WTC11 (cell line): ENCODE measurements at regions of chr18 and their contacts with region 1.

Region 1: GRCh38 chr18:12766986-12767433 is 64.2 kb downstream of the PSMG2 start:
- DNase-seq: peak; percentile 82
- ATAC-seq: peak; percentile 99
- H3K4me3 Mint-ChIP-seq: no peak overlapping the region
- H3K27ac Mint-ChIP-seq: no peak overlapping the region
- H3K4me1 Mint-ChIP-seq: peaks cover 4% of the 10 kb centered on the region
- H3K27me3 Mint-ChIP-seq: no peaks in the 10 kb centered on the region
- CTCF ChIP-seq: no peak

Region 2: GRCh38 chr18:12726774-12727550 is 40.0 kb before region 1 on chr18:
- CTCF ChIA-PET with region 1: interaction called, 19 read pairs
- POLR2A ChIA-PET with region 1: interaction called, 4 read pairs
- DNase-seq: peak; percentile 60
- ATAC-seq: peak; percentile 89
- H3K4me3 Mint-ChIP-seq: no peak overlapping the region
- H3K27ac Mint-ChIP-seq: peak overlapping the region; percentile 43
- H3K4me1 Mint-ChIP-seq: peaks cover 7% of the 10 kb centered on the region
- H3K27me3 Mint-ChIP-seq: no peaks in the 10 kb centered on the region
- CTCF ChIP-seq: peak; percentile 90

Region 3: DNA sequence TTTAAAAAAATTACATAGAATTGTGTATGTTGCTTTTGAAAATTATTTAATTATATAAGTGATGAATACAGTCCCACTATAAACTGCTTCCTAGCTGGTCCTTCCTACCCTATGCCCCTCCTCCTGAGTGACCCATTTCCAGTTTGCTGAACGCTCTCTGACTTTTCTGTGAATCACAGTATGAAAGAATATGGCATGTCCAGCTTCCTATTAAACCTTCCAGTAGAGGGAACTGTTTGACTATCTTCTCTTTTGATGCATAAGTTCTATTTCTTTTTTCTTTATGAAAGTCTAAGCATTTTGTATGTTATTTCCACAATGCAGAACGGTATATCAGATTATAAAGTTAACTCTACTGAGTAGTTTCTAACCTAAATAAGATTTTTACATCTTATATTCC is 22.9 kb before region 1 on chr18:
- CTCF ChIA-PET with region 1: interaction called, 11 read pairs
- POLR2A ChIA-PET with region 1: no interaction called
- DNase-seq: no peak
- ATAC-seq: no peak; the same call in 1 of the 2 replicates
- H3K4me3 Mint-ChIP-seq: no peak overlapping the region
- H3K27ac Mint-ChIP-seq: no peak overlapping the region
- H3K4me1 Mint-ChIP-seq: no peaks in the 10 kb centered on the region
- H3K27me3 Mint-ChIP-seq: no peaks in the 10 kb centered on the region
- CTCF ChIP-seq: no peak

Region 4: DNA sequence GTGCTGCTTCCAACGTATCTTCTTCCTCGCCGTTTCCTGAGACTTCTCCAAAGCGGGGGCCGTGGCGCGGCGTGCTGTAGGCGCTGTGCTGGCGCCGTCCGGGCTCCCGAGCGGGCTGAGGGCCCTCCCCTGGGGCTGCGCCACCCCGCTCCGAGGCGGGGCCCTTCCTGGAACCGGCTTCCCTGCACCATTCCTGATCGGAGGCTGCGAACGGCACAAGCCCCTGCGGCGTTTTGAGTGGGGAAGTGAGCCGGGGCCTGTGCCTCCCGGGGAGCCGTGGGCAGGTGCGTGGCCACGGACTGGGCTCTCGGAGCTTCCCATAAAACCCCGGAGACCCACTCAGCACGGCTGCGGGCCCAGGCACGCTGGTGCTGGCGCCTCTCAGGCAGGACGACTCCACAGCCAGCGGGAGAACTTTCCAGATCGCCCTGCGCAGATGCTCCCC is 10.5 kb after region 1 on chr18:
- CTCF ChIA-PET with region 1: interaction called, 16 read pairs
- POLR2A ChIA-PET with region 1: interaction called, 9 read pairs
- DNase-seq: peak; percentile 53
- ATAC-seq: peak; percentile 74
- H3K4me3 Mint-ChIP-seq: peak overlapping the region; percentile 65
- H3K27ac Mint-ChIP-seq: no peak overlapping the region
- H3K4me1 Mint-ChIP-seq: no peaks in the 10 kb centered on the region
- H3K27me3 Mint-ChIP-seq: peaks cover 48% of the 10 kb centered on the region
- CTCF ChIP-seq: no peak

Region 5: DNA sequence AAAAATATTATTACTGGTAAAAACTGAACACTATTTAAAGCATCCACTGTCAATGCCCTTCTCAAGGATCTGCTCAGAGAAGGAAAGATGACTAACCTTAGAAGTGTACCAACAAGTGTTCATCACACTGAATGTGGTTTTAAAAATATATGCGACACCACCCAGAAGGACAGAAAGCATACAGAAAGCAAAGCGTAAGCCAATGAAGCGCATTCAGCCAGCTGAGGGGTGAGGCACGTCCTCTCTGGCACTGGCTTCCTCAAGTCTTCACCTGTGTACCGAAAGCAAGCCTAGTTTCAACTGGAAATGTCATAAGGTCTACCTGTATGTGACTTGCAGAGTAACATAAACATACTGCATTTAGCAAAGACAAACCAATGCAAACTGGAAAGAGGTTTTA is 24.6 kb after region 1 on chr18:
- CTCF ChIA-PET with region 1: no interaction called
- POLR2A ChIA-PET with region 1: no interaction called
- DNase-seq: no peak
- ATAC-seq: no peak
- H3K4me3 Mint-ChIP-seq: no peak overlapping the region
- H3K27ac Mint-ChIP-seq: no peak overlapping the region
- H3K4me1 Mint-ChIP-seq: no peaks in the 10 kb centered on the region
- H3K27me3 Mint-ChIP-seq: no peaks in the 10 kb centered on the region
- CTCF ChIP-seq: no peak